ENCODE measurements at regions of chr4 and their contacts with region 1.

Region 1: GRCh38 chr4:121182296-121182695 is 18.2 kb upstream of the TNIP3 start:
- DNase-seq: no peak

Region 2: GRCh38 chr4:121199742-121200561 is 17.7 kb after region 1 on chr4:
- intact Hi-C with region 1: loop called in 1 of 2 experiments (anchors 2 kb)
- DNase-seq: no peak

Measured in posterior vena cava (tissue), 2 donors.